Breast epithelium (tissue), 4 donors: ENCODE measurements at regions of chr20 and their contacts with region 1.

Region 1: DNA sequence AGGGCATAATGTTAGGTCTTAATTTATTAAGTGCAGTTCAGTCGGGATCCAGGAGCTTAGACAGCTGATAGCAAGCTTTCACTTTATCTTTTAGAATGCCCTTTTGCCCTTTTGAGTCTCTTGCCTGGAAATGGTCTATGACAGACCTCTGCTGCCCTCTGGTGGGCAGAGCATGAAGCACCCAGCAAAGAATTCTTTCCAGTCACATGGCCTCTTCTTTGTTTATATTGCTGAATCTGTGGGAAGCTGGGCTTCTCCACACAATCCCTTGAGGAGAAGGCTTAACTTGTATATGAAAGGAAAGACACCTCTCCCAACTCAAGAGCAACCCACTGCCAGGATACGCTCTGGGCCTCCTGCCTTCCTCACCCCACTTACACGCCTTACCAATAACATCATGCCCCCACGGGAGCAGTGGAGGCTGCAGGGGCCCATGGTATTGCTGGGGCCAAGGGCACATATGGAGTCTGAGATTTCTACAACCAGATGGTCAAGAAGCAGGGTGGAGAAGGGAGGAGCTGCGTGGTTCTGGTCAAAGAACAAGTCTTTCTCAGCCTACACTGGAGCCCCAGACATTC is 20.4 kb downstream of the WFDC3 start:
- DNase-seq: peak; percentile 67 to 73
- H3K4me3 ChIP-seq: no peak overlapping the region
- H3K27ac ChIP-seq: peak overlapping the region; percentile 50 to 60
- H3K4me1 ChIP-seq: peaks cover 0 to 4% of the 10 kb centered on the region in 2 donors
- H3K27me3 ChIP-seq: no peaks in the 10 kb centered on the region
- CTCF ChIP-seq: peak; percentile 85 to 95 (median 93)
- POLR2A ChIP-seq: no peak

Region 2: GRCh38 chr20:44642203-44643153 is 1128.8 kb before region 1 on chr20:
- intact Hi-C with region 1: no loop called
- DNase-seq: peak; percentile 43 to 60
- H3K4me3 ChIP-seq: peak overlapping the region in 2 of 3 donors; percentile 11 to 52
- H3K27ac ChIP-seq: peak overlapping the region; percentile 71 to 89
- H3K4me1 ChIP-seq: peaks cover 3 to 4% of the 10 kb centered on the region in 2 donors
- H3K27me3 ChIP-seq: no peaks in the 10 kb centered on the region
- CTCF ChIP-seq: no peak
- POLR2A ChIP-seq: no peak

Region 3: GRCh38 chr20:45311589-45312211 is 459.6 kb before region 1 on chr20:
- intact Hi-C with region 1: loop called (anchors 10 kb)
- DNase-seq: no peak
- H3K4me3 ChIP-seq: no peak overlapping the region
- H3K27ac ChIP-seq: no peak overlapping the region
- H3K4me1 ChIP-seq: peaks cover 0 to 5% of the 10 kb centered on the region in 2 donors
- H3K27me3 ChIP-seq: peaks cover 3 to 31% of the 10 kb centered on the region in 2 donors
- CTCF ChIP-seq: peak; percentile 37 to 66 (median 55)
- POLR2A ChIP-seq: no peak

Region 4: DNA sequence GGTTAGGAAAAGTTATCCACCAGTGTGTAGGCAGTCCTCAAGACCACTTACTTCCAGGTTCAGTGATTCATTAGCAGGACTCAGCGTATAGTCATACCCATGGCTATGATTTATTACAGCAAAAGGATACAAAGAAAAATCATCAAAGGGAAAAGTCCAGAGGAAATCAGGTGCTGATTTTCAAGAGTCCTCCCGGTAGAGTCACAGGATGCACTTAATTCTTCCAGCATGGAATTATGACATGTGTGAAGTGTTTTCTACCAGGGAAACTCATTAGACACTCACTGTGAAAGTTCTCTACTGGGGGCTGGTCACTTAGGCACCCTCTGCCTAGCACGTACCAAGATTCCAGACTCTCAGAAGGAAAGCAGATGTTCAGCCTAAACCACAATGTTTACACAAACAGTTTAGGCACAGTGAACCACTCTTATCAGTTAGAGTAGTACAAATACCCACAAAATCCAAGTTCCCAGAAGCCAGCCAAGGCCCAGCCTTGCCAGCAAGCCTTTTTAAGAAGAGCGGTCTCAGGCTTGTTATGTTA is 10.2 kb after region 1 on chr20:
- intact Hi-C with region 1: loop called (anchors 1 kb)
- DNase-seq: no peak
- H3K4me3 ChIP-seq: no peak overlapping the region
- H3K27ac ChIP-seq: peak overlapping the region; percentile 65 to 98
- H3K4me1 ChIP-seq: peaks cover 0 to 30% of the 10 kb centered on the region in 2 donors
- H3K27me3 ChIP-seq: no peaks in the 10 kb centered on the region
- CTCF ChIP-seq: no peak
- POLR2A ChIP-seq: no peak